ENCODE measurements at regions of chr6 and their contacts with region 1.

Region 1: GRCh38 chr6:88761237-88762031 is 202.0 kb downstream of the RNGTT start:
- DNase-seq: peak; percentile 9
- ATAC-seq: no peak
- H3K4me3 ChIP-seq: no peak overlapping the region
- H3K27ac ChIP-seq: no peak overlapping the region
- H3K4me1 ChIP-seq: peaks cover 24% of the 10 kb centered on the region; the same call in 1 of the 2 replicates
- H3K27me3 ChIP-seq: no peaks in the 10 kb centered on the region
- CTCF ChIP-seq: peak; percentile 29; the same call in 1 of the 2 replicates

Region 2: GRCh38 chr6:88360203-88360797 is 401.1 kb before region 1 on chr6:
- CTCF ChIA-PET with region 1: no interaction called
- POLR2A ChIA-PET with region 1: no interaction called
- intact Hi-C with region 1: no loop called
- DNase-seq: peak; percentile 58
- ATAC-seq: no peak; the same call in 1 of the 2 replicates
- H3K4me3 ChIP-seq: no peak overlapping the region
- H3K27ac ChIP-seq: no peak overlapping the region
- H3K4me1 ChIP-seq: peaks cover 15% of the 10 kb centered on the region
- H3K27me3 ChIP-seq: no peaks in the 10 kb centered on the region
- CTCF ChIP-seq: no peak

Region 3: DNA sequence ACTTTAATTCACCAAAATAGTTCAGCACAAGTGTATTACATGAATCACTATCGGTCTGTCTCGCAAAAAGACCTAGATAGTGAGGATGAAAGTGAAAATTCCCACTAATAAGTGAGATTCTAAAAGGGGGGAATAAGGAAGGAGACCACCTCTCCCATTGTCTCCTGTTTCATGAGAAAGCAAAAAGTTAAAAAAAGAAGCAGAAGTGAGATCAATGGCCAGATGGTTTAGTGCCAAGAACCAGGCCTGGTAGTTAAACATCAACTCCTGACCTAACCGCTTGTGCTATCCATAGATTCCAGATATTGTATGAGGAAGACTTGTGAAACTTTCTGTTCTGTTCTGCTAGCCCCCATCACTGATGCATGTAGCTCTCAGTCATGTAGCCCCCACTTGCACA is 91.1 kb before region 1 on chr6:
- CTCF ChIA-PET with region 1: no interaction called
- POLR2A ChIA-PET with region 1: no interaction called
- intact Hi-C with region 1: no loop called
- DNase-seq: no peak
- ATAC-seq: no peak
- H3K4me3 ChIP-seq: no peak overlapping the region
- H3K27ac ChIP-seq: no peak overlapping the region
- H3K4me1 ChIP-seq: no peaks in the 10 kb centered on the region
- H3K27me3 ChIP-seq: no peaks in the 10 kb centered on the region
- CTCF ChIP-seq: no peak

Region 4: GRCh38 chr6:88722686-88723085 is 38.7 kb before region 1 on chr6:
- CTCF ChIA-PET with region 1: no interaction called
- POLR2A ChIA-PET with region 1: interaction called, 21 read pairs
- intact Hi-C with region 1: no loop called
- DNase-seq: no peak
- ATAC-seq: no peak
- H3K4me3 ChIP-seq: no peak overlapping the region
- H3K27ac ChIP-seq: no peak overlapping the region
- H3K4me1 ChIP-seq: no peaks in the 10 kb centered on the region
- H3K27me3 ChIP-seq: no peaks in the 10 kb centered on the region
- CTCF ChIP-seq: no peak

Measured in PC-3 (cell line).